Calu3 (cell line): ENCODE measurements at regions of chr14 and their contacts with region 1.

Region 1: DNA sequence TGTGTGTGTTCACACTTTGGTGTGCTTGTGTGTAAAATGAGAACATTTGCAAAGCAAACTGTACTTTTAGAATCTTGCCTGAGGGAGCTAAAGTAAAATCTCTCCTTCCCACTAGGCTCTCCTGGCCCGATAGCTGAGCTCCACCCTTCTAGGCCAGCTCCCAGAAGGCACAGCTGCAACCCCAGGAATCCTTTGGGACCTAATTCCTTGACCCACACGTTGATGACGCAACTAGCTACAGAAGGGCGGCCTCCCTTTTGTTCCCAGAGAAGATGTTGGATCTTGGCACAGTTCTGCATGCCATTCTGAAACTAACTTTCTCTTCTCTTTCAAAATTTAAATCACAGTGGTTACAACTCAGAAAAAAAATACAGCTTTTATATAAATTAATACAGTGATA is 268.1 kb downstream of the EGLN3 start:
- DNase-seq: no peak
- H3K4me3 Mint-ChIP-seq: no peak overlapping the region
- H3K27ac Mint-ChIP-seq: no peak overlapping the region
- H3K4me1 Mint-ChIP-seq: no peaks in the 10 kb centered on the region
- H3K27me3 Mint-ChIP-seq: peaks cover 47% of the 10 kb centered on the region
- CTCF ChIP-seq: no peak

Region 2: DNA sequence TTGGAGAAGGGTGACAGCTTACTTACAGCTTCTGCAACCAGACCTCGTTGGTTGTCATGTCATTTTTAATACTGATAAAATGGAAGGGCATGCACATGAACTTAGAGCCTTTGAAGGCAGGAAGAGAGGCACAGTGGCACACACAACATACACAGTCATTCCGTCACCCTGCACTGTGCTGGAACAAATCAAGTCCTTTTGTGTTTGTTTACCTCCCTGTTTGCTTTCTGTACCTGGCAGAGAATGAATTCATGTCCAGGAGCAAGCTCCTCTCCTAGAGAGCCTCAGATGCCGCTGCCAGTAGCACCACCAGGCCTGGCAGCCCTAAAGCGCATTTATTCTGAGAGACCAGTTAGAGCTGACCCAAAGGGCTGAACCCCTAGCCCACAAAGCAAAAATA is 192.2 kb before region 1 on chr14:
- CTCF ChIA-PET with region 1: no interaction called
- intact Hi-C with region 1: loop called (anchors 10 kb)
- DNase-seq: no peak
- H3K4me3 Mint-ChIP-seq: no peak overlapping the region
- H3K27ac Mint-ChIP-seq: no peak overlapping the region
- H3K4me1 Mint-ChIP-seq: no peaks in the 10 kb centered on the region
- H3K27me3 Mint-ChIP-seq: peaks cover 70% of the 10 kb centered on the region
- CTCF ChIP-seq: no peak